B cell (primary cell): ENCODE measurements at regions of chr19 and their contacts with region 1.

Region 1: GRCh38 chr19:45485305-45486077 is 11.4 kb downstream of the RTN2 start:
- DNase-seq: peak; percentile 96
- ATAC-seq: peak; percentile 99
- H3K4me3 ChIP-seq: peak overlapping the region; percentile 38 to 80 (median 63)
- H3K4me3 Mint-ChIP-seq: peak overlapping the region; percentile 95
- H3K27ac ChIP-seq: no peak overlapping the region
- H3K27ac Mint-ChIP-seq: peak overlapping the region; percentile 76
- H3K4me1 ChIP-seq: peaks cover 3 to 9% of the 10 kb centered on the region in 2 donors
- H3K4me1 Mint-ChIP-seq: peaks cover 11% of the 10 kb centered on the region
- H3K27me3 ChIP-seq: no peaks in the 10 kb centered on the region
- H3K27me3 Mint-ChIP-seq: no peaks in the 10 kb centered on the region
- CTCF ChIP-seq: peak; percentile 92

Region 2: GRCh38 chr19:45245334-45245787 is 240.1 kb before region 1 on chr19 and contains the start of gene EXOC3L2:
- CTCF ChIA-PET with region 1: no interaction called
- POLR2A ChIA-PET with region 1: no interaction called
- intact Hi-C with region 1: loop called (anchors 10 kb)
- DNase-seq: no peak
- ATAC-seq: no peak
- H3K4me3 ChIP-seq: no peak within 1 kb of the TSS
- H3K4me3 Mint-ChIP-seq: no peak within 1 kb of the TSS
- H3K27ac ChIP-seq: no peak within 1 kb of the TSS
- H3K27ac Mint-ChIP-seq: no peak within 1 kb of the TSS
- H3K4me1 ChIP-seq: peaks cover under 1 to 9% of the 10 kb centered on the region in 2 donors
- H3K4me1 Mint-ChIP-seq: peaks cover 5% of the 10 kb centered on the region
- H3K27me3 ChIP-seq: no peaks in the 10 kb centered on the region
- H3K27me3 Mint-ChIP-seq: peaks cover 11% of the 10 kb centered on the region
- CTCF ChIP-seq: no peak
- total RNA-seq, gene EXOC3L2: not detected in 2 replicates

Region 3: GRCh38 chr19:45340232-45340898 is 145.1 kb before region 1 on chr19 and contains the start of gene KLC3:
- CTCF ChIA-PET with region 1: no interaction called
- POLR2A ChIA-PET with region 1: no interaction called
- intact Hi-C with region 1: no loop called
- DNase-seq: peak; percentile 63
- ATAC-seq: no peak
- H3K4me3 ChIP-seq: peak within 1 kb of the TSS in 2 of 5 experiments; percentile 28 to 33
- H3K4me3 Mint-ChIP-seq: peak within 1 kb of the TSS; percentile 73
- H3K27ac ChIP-seq: no peak within 1 kb of the TSS
- H3K27ac Mint-ChIP-seq: no peak within 1 kb of the TSS
- H3K4me1 ChIP-seq: peaks cover 11 to 16% of the 10 kb centered on the region in 2 donors
- H3K4me1 Mint-ChIP-seq: peaks cover 6% of the 10 kb centered on the region
- H3K27me3 ChIP-seq: peaks cover 0 to 42% (median 6%) of the 10 kb centered on the region in 4 experiments
- H3K27me3 Mint-ChIP-seq: peaks cover 35% of the 10 kb centered on the region
- CTCF ChIP-seq: no peak
- total RNA-seq, gene KLC3: not detected in 2 replicates

Region 4: DNA sequence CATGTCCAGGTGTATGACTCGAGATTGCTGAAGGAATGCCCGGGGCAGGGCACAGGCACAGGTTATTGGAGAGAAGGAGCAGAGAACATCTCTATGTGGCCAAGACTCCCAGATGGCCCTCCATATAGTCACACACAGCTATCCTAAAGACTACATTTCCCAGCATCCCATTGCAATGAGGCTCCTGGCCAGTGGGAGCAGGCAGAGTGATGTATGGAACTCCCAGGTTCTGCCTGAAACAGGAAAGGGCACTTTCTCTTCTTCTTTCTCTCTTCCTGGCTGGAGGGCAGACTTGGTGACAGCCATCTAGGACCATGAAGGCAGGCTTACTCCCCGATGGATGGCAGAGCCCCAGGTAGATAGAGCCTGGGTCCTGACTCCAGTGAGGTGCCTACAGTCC is 94.2 kb before region 1 on chr19:
- CTCF ChIA-PET with region 1: no interaction called
- POLR2A ChIA-PET with region 1: no interaction called
- intact Hi-C with region 1: no loop called
- DNase-seq: no peak
- ATAC-seq: no peak
- H3K4me3 ChIP-seq: no peak overlapping the region
- H3K4me3 Mint-ChIP-seq: no peak overlapping the region
- H3K27ac ChIP-seq: no peak overlapping the region
- H3K27ac Mint-ChIP-seq: no peak overlapping the region
- H3K4me1 ChIP-seq: no peaks in the 10 kb centered on the region
- H3K4me1 Mint-ChIP-seq: peaks cover 2% of the 10 kb centered on the region
- H3K27me3 ChIP-seq: peaks cover 0 to 6% (median 0%) of the 10 kb centered on the region in 4 experiments
- H3K27me3 Mint-ChIP-seq: peaks cover 11% of the 10 kb centered on the region
- CTCF ChIP-seq: no peak

Region 5: DNA sequence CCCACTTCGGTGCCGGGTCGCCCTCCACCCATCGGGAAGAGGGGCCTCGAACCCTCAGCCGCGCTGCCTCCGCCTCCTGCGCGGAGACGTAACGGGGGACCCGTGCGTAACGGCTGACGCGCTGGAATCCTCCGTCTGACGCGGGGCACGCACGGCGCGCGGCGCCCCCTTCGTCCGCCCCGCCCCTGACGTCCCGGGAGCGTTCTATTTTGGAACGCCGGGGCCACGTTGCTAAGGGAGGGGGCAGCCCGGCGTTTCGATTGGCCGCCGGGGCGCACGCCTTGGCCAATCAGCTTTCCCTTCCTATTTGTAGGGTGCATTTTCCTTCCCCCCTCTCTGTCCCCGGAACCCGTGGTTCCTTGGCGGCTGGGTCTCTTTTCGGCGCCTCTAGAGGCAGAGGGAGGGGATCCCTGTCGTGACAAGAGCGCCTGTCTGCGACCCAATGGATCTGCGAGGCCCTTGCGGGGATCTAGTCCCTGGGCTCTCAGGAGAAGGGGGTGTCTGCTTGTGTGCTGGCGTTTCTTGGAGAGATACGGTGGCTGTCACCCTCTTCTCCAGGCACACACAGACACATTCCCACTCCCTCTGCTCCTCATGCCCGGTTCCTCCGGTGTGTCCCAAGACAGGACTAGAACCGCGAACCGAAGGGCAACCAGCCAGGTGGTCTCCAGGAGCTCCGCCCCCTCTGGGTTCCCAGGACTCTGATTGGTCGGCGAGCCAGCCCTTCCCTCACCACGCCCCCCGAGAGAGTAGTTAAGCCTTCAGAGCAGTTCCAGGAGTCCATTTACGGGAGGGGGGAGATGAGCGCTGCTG is 16.2 kb before region 1 on chr19:
- CTCF ChIA-PET with region 1: interaction called, 98 read pairs
- POLR2A ChIA-PET with region 1: interaction called, 7 read pairs
- intact Hi-C with region 1: loop called (anchors 2 kb)
- DNase-seq: peak; percentile 97
- ATAC-seq: peak; percentile 57
- H3K4me3 ChIP-seq: peak overlapping the region; percentile 59 to 100 (median 95)
- H3K4me3 Mint-ChIP-seq: peak overlapping the region; percentile 92
- H3K27ac ChIP-seq: peak overlapping the region; percentile 96 to 100
- H3K27ac Mint-ChIP-seq: peak overlapping the region; percentile 95
- H3K4me1 ChIP-seq: peaks cover 38 to 57% of the 10 kb centered on the region in 2 donors
- H3K4me1 Mint-ChIP-seq: peaks cover 50% of the 10 kb centered on the region
- H3K27me3 ChIP-seq: peaks cover 0 to 33% (median 15%) of the 10 kb centered on the region in 4 experiments
- H3K27me3 Mint-ChIP-seq: peaks cover 24% of the 10 kb centered on the region
- CTCF ChIP-seq: no peak

Region 6: GRCh38 chr19:45496349-45496953 is 11.0 kb after region 1 on chr19:
- CTCF ChIA-PET with region 1: interaction called, 38 read pairs
- POLR2A ChIA-PET with region 1: no interaction called
- intact Hi-C with region 1: no loop called
- DNase-seq: peak; percentile 66
- ATAC-seq: peak; percentile 6
- H3K4me3 ChIP-seq: peak overlapping the region in 4 of 5 experiments; percentile 52 to 64 (median 60)
- H3K4me3 Mint-ChIP-seq: peak overlapping the region; percentile 73
- H3K27ac ChIP-seq: no peak overlapping the region
- H3K27ac Mint-ChIP-seq: no peak overlapping the region
- H3K4me1 ChIP-seq: peaks cover 43 to 51% of the 10 kb centered on the region in 2 donors
- H3K4me1 Mint-ChIP-seq: peaks cover 45% of the 10 kb centered on the region
- H3K27me3 ChIP-seq: peaks cover 0 to 49% (median 24%) of the 10 kb centered on the region in 4 experiments
- H3K27me3 Mint-ChIP-seq: peaks cover 21% of the 10 kb centered on the region
- CTCF ChIP-seq: no peak

Region 7: GRCh38 chr19:45506246-45506990 is 20.9 kb after region 1 on chr19:
- CTCF ChIA-PET with region 1: interaction called, 16 read pairs
- POLR2A ChIA-PET with region 1: no interaction called
- intact Hi-C with region 1: loop called (anchors 1 kb)
- DNase-seq: peak; percentile 98
- ATAC-seq: peak; percentile 74
- H3K4me3 ChIP-seq: peak overlapping the region; percentile 63 to 96 (median 84)
- H3K4me3 Mint-ChIP-seq: peak overlapping the region; percentile 94
- H3K27ac ChIP-seq: peak overlapping the region; percentile 83 to 87
- H3K27ac Mint-ChIP-seq: peak overlapping the region; percentile 94
- H3K4me1 ChIP-seq: peaks cover 26 to 43% of the 10 kb centered on the region in 2 donors
- H3K4me1 Mint-ChIP-seq: peaks cover 54% of the 10 kb centered on the region
- H3K27me3 ChIP-seq: no peaks in the 10 kb centered on the region
- H3K27me3 Mint-ChIP-seq: no peaks in the 10 kb centered on the region
- CTCF ChIP-seq: peak; percentile 63

Region 8: DNA sequence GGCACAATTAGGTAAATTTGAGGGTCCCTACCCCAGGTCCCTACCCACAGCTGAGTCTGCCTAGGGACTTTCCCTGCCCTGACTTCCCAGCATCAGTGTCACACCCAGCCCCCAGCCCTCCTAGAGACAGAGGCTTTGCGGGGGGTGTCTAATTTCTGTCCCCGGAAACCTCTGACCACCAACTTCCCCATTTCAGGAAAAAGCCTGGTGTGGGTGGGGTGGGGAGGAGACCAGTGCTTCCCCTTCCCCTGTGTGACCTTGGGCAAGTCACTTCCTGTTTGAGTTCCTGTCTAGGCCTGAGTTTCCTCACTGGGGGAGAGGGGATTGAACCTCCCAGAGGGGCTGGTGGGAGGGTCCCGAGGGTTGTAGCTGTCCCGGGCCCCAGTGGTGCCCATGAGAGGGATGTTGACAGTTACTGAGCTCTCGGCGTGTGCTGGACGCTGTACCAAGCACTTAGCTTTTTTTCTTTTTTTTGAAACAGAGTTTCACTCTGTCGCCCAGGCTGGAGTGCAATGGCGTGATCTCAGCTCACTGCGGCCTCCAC is 29.7 kb after region 1 on chr19:
- CTCF ChIA-PET with region 1: interaction called, 14 read pairs
- POLR2A ChIA-PET with region 1: no interaction called
- intact Hi-C with region 1: no loop called
- DNase-seq: peak; percentile 89
- ATAC-seq: peak; percentile 75
- H3K4me3 ChIP-seq: peak overlapping the region; percentile 4 to 57 (median 29)
- H3K4me3 Mint-ChIP-seq: peak overlapping the region; percentile 74
- H3K27ac ChIP-seq: peak overlapping the region; percentile 76 to 91
- H3K27ac Mint-ChIP-seq: peak overlapping the region; percentile 87
- H3K4me1 ChIP-seq: peaks cover 62 to 64% of the 10 kb centered on the region in 2 donors
- H3K4me1 Mint-ChIP-seq: peaks cover 63% of the 10 kb centered on the region
- H3K27me3 ChIP-seq: no peaks in the 10 kb centered on the region
- H3K27me3 Mint-ChIP-seq: no peaks in the 10 kb centered on the region
- CTCF ChIP-seq: no peak

Region 9: DNA sequence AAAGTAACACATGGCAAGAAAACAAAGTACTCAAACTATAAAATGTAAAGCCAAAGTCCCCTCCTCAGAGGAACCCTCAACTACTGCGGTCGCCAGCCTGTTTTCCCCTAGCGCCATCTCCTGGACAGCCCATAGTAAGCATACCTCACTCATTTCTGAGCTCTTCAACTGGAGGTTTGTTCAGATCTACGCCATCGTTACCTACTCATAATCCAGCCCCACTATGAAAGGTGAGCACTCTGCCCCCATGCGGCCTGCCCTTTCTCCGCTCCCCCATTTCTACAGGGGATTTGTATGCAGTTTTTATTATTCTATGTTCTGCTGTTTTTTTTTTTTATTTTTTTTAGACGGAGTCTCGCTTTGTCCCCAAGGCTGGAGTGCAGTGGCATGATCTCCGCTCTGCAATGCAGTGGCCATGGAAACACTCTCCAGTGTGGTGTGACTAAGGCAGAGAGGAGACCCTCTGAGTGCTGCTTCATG is 72.9 kb after region 1 on chr19:
- CTCF ChIA-PET with region 1: interaction called, 11 read pairs
- POLR2A ChIA-PET with region 1: no interaction called
- intact Hi-C with region 1: loop called (anchors 2 kb)
- DNase-seq: peak; percentile 84
- ATAC-seq: peak; percentile 98
- H3K4me3 ChIP-seq: no peak overlapping the region
- H3K4me3 Mint-ChIP-seq: no peak overlapping the region
- H3K27ac ChIP-seq: peak overlapping the region in 1 of 2 donors; percentile 30
- H3K27ac Mint-ChIP-seq: peak overlapping the region; percentile 8
- H3K4me1 ChIP-seq: peaks cover 3 to 31% of the 10 kb centered on the region in 2 donors
- H3K4me1 Mint-ChIP-seq: peaks cover 23% of the 10 kb centered on the region
- H3K27me3 ChIP-seq: no peaks in the 10 kb centered on the region
- H3K27me3 Mint-ChIP-seq: no peaks in the 10 kb centered on the region
- CTCF ChIP-seq: peak; percentile 85

Region 10: GRCh38 chr19:45632468-45633196 is 147.1 kb after region 1 on chr19:
- CTCF ChIA-PET with region 1: no interaction called
- POLR2A ChIA-PET with region 1: no interaction called
- intact Hi-C with region 1: no loop called
- DNase-seq: peak; percentile 31
- ATAC-seq: peak; percentile 36
- H3K4me3 ChIP-seq: no peak overlapping the region
- H3K4me3 Mint-ChIP-seq: no peak overlapping the region
- H3K27ac ChIP-seq: no peak overlapping the region
- H3K27ac Mint-ChIP-seq: no peak overlapping the region
- H3K4me1 ChIP-seq: no peaks in the 10 kb centered on the region
- H3K4me1 Mint-ChIP-seq: peaks cover 1% of the 10 kb centered on the region
- H3K27me3 ChIP-seq: no peaks in the 10 kb centered on the region
- H3K27me3 Mint-ChIP-seq: no peaks in the 10 kb centered on the region
- CTCF ChIP-seq: no peak